MCF 10A (cell line): ENCODE measurements at regions of chr1 and their contacts with region 1.

Region 1: DNA sequence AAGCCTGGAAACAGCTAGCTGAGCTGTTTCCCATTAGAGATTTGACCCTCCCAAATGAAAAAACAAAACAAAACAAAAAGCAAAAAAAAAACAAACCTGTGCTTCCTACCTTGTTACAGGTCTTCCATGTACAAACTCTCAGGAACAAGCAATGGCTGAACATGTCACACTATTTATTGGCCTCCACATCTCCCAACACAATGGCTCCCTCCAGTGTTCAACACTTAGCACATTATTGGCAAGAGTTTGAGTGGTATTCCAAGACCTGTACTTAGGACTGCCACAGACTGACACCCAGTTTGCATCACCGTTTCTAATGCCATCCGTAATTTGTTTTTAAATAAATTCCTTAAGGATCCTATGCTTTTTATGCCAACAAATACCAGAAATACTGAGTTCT is 195.0 kb upstream of the OLFM3 start:
- DNase-seq: peak; percentile 74
- H3K4me3 Mint-ChIP-seq: no peak overlapping the region
- H3K27ac Mint-ChIP-seq: no peak overlapping the region
- H3K4me1 Mint-ChIP-seq: no peaks in the 10 kb centered on the region
- H3K27me3 Mint-ChIP-seq: peaks cover 64% of the 10 kb centered on the region
- CTCF ChIP-seq: peak; percentile 35

Region 2: DNA sequence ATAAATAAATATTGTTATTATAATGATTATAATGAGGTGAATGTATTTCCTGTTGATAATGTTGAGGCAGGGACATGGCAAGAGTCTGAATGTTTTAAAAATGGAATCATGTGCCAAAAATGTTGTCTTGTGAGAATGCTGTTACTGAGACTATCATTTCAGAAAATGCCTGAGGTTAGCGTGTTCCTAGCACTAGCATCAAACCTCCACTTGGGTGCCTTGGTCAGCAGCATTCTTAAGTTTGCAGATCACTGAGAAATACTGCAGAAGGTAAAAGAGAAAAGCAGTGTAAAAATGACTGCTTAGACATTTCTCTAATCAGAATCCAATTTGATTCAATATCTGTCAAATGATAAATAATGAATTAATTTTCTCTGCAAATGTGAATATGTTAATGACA is 245.8 kb before region 1 on chr1:
- CTCF ChIA-PET with region 1: no interaction called
- POLR2A ChIA-PET with region 1: no interaction called
- intact Hi-C with region 1: no loop called
- DNase-seq: no peak
- H3K4me3 Mint-ChIP-seq: no peak overlapping the region
- H3K27ac Mint-ChIP-seq: no peak overlapping the region
- H3K4me1 Mint-ChIP-seq: no peaks in the 10 kb centered on the region
- H3K27me3 Mint-ChIP-seq: peaks cover 36% of the 10 kb centered on the region
- CTCF ChIP-seq: no peak

Region 3: GRCh38 chr1:101993710-101994109 is 198.0 kb before region 1 on chr1:
- CTCF ChIA-PET with region 1: interaction called, 4 read pairs
- POLR2A ChIA-PET with region 1: no interaction called
- intact Hi-C with region 1: loop called (anchors 1 kb)
- DNase-seq: no peak
- H3K4me3 Mint-ChIP-seq: no peak overlapping the region
- H3K27ac Mint-ChIP-seq: no peak overlapping the region
- H3K4me1 Mint-ChIP-seq: no peaks in the 10 kb centered on the region
- H3K27me3 Mint-ChIP-seq: peaks cover 51% of the 10 kb centered on the region
- CTCF ChIP-seq: no peak